OCI-LY7 (cell line): ENCODE measurements at regions of chr1 and their contacts with region 1.

Region 1: GRCh38 chr1:226656601-226657277 is 82.3 kb downstream of the ITPKB start:
- DNase-seq: peak; percentile 50
- H3K4me3 ChIP-seq: peak overlapping the region; percentile 68
- H3K27ac ChIP-seq: no peak overlapping the region
- H3K4me1 ChIP-seq: no peaks in the 10 kb centered on the region
- CTCF ChIP-seq: no peak

Region 2: DNA sequence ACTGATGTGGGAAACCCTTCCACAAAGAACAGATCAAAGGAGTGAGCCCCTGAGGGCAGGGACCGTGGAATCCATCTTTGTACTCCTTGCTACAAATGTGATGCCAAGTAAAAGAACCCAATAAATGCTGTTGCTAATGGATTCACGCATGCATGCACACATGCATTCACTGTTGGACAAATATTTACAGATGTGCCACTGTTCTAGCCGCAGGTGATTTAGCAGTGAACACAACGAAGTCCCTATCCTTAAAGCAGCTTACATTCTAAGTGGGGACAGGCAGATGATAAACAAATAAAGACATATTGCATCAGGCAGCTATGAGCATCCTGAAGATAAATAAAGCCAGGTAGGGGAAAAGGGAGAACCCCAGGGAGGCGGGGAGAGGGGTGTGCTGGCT is 14.6 kb after region 1 on chr1:
- CTCF ChIA-PET with region 1: interaction called, 23 read pairs
- POLR2A ChIA-PET with region 1: interaction called, 125 read pairs
- intact Hi-C with region 1: loop called (anchors 2 kb)
- DNase-seq: peak; percentile 48
- H3K4me3 ChIP-seq: peak overlapping the region; percentile 31
- H3K27ac ChIP-seq: peak overlapping the region; percentile 98
- H3K4me1 ChIP-seq: peaks cover 96% of the 10 kb centered on the region
- CTCF ChIP-seq: no peak

Region 3: GRCh38 chr1:226679853-226680516 is 23.2 kb after region 1 on chr1:
- CTCF ChIA-PET with region 1: interaction called, 23 read pairs
- POLR2A ChIA-PET with region 1: interaction called, 125 read pairs
- intact Hi-C with region 1: loop called (anchors 2 kb)
- DNase-seq: peak; percentile 84
- H3K4me3 ChIP-seq: peak overlapping the region; percentile 47
- H3K27ac ChIP-seq: peak overlapping the region; percentile 98
- H3K4me1 ChIP-seq: peaks cover 99% of the 10 kb centered on the region
- CTCF ChIP-seq: no peak

Region 4: DNA sequence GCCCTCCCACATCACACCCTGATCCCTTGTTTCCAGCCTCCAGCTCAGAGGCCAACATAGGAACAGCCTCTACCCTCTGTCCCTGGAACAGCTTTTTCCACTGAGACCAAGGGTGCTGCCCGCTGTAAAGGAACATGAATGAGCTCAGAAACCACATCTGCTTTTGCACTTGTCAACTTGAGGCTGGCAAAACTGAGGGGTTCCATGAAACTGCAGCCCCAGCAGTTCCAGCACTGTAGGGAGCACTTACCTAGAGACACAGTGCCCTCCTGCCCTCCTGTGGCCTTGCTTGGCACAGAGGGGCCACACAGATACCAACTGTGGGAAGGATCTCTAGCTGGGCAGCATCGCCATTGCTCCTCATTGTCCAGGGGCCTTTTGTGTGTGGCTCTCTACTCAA is 30.7 kb after region 1 on chr1:
- CTCF ChIA-PET with region 1: interaction called, 28 read pairs
- POLR2A ChIA-PET with region 1: interaction called, 26 read pairs
- intact Hi-C with region 1: no loop called
- DNase-seq: peak; percentile 66
- H3K4me3 ChIP-seq: peak overlapping the region; percentile 27
- H3K27ac ChIP-seq: peak overlapping the region; percentile 73
- H3K4me1 ChIP-seq: peaks cover 99% of the 10 kb centered on the region
- CTCF ChIP-seq: peak; percentile 71

Region 5: GRCh38 chr1:226711976-226712741 is 55.4 kb after region 1 on chr1:
- CTCF ChIA-PET with region 1: interaction called, 3 read pairs
- POLR2A ChIA-PET with region 1: interaction called, 5 read pairs
- intact Hi-C with region 1: loop called (anchors 2 kb)
- DNase-seq: peak; percentile 86
- H3K4me3 ChIP-seq: peak overlapping the region; percentile 62
- H3K27ac ChIP-seq: peak overlapping the region; percentile 99
- H3K4me1 ChIP-seq: peaks cover 92% of the 10 kb centered on the region
- CTCF ChIP-seq: no peak

Region 6: DNA sequence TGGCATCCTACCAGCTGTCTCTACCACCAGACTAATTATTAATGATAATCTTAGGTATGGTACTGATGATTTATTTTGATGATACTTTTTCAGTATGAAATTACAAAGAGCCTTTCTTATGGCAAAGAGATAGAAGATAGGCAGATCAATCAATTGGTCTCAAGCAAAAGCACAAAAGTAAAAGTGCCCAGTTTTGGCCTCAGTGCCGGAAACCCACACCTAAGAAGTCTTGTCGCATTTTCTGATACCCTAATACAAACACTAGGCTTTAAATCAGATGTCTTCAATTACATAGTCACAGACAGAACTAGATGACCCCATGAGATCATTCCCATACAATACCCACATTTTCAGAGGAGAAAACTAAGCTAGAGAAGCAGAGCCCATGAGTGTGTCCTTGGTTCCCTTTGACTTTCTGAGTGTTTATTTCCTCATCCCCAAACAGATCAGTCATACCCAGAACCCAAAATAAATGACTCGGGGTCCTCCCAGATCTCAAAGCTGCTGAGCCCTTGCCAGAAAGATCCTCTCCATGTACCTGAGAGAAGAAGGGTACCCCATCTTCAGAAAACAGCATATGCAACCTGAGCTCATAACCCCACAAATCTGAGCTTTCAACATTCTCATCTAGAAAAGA is 74.6 kb after region 1 on chr1:
- CTCF ChIA-PET with region 1: interaction called, 3 read pairs
- POLR2A ChIA-PET with region 1: interaction called, 18 read pairs
- intact Hi-C with region 1: no loop called
- DNase-seq: no peak
- H3K4me3 ChIP-seq: peak overlapping the region; percentile 83
- H3K27ac ChIP-seq: peak overlapping the region; percentile 21
- H3K4me1 ChIP-seq: peaks cover 99% of the 10 kb centered on the region
- CTCF ChIP-seq: no peak